ENCODE measurements at regions of chr7 and their contacts with region 1.

Region 1: DNA sequence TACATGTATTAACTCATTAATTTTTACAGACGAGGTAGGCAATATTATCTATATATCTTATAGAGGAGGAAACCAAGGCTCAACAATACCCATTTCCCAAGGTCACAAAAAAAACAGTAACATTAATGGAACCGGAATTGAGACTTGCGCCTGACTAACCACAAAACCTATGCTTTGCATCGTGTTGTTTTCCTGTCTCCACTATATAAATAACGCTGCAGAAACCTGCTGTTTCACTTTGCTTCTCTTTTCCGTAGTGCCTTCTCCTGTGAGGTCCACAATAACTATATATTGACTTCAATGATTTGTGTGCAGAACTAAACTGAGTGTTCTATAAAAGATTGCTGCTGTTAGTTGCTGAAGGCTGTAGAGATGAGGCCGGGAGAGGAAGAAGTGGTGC is 97.7 kb upstream of the RPA3 start:
- DNase-seq: no peak
- H3K4me3 ChIP-seq: no peak overlapping the region
- H3K27ac ChIP-seq: no peak overlapping the region
- H3K4me1 ChIP-seq: no peaks in the 10 kb centered on the region
- H3K27me3 ChIP-seq: no peaks in the 10 kb centered on the region
- CTCF ChIP-seq: no peak

Region 2: DNA sequence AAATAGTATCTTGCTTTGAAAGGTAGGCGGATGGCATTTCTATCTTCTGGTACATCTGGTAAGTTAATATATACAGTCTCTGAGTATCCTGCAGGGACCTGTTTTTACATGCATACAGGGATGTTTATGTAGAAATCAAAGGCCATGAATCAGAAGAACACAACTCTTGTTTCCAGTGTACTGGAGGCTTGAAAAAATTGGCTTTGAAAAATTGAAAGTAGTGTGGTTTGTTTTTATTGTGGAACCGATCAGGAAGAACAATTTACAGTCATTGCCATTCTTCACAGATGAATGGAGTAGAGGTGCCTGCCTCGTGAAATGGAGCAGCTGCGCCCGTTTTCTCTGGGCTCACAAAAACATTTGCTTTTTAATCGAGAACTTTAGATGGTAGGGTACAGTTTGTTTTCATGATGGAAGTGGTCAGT is 43.7 kb before region 1 on chr7:
- CTCF ChIA-PET with region 1: interaction called, 12 read pairs
- POLR2A ChIA-PET with region 1: no interaction called
- intact Hi-C with region 1: no loop called
- DNase-seq: no peak
- H3K4me3 ChIP-seq: no peak overlapping the region
- H3K27ac ChIP-seq: no peak overlapping the region
- H3K4me1 ChIP-seq: no peaks in the 10 kb centered on the region
- H3K27me3 ChIP-seq: no peaks in the 10 kb centered on the region
- CTCF ChIP-seq: no peak

Measured in PC-9 (cell line).